HCT116 (cell line): ENCODE measurements at regions of chr9 and their contacts with region 1.

Region 1: GRCh38 chr9:81848472-81848871 is 79.8 kb upstream of the SPATA31D4 start:
- DNase-seq: no peak
- ATAC-seq: no peak
- H3K4me3 ChIP-seq: no peak overlapping the region
- H3K27ac ChIP-seq: no peak overlapping the region
- H3K4me1 ChIP-seq: peaks cover 3 to 15% of the 10 kb centered on the region in 2 experiments; a peak in 2 of 4 replicates
- H3K27me3 ChIP-seq: no peaks in the 10 kb centered on the region
- CTCF ChIP-seq: peak; percentile 11 to 45 (median 33); a peak in 4 of 6 replicates
- POLR2A ChIP-seq: no peak
- RAD21 ChIP-seq: peak; percentile 58

Region 2: DNA sequence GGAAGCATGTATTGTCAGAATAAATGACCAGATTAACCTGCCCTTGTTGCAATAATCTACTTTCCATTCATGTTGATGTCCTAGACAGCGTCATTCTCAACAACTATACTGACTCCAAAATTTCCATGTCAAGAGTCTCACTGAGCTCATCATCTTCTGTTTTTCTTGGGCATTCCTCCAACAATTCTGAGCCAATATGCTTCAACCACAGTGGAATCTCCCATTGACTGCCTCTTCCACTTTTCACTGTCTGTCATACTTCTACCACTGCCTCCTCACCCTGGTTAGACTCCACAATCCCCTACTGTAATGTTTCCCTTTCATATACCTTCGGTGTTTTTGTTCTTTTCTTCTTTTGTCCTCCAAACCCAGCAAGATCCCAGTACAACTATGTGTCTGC is 321.9 kb before region 1 on chr9:
- CTCF ChIA-PET with region 1: interaction called, 7 read pairs
- POLR2A ChIA-PET with region 1: no interaction called
- RAD21 ChIA-PET with region 1: no interaction called
- intact Hi-C with region 1: loop called (anchors 2 kb)
- DNase-seq: no peak
- ATAC-seq: no peak
- H3K4me3 ChIP-seq: no peak overlapping the region
- H3K27ac ChIP-seq: no peak overlapping the region
- H3K4me1 ChIP-seq: peaks cover 3 to 25% of the 10 kb centered on the region in 2 experiments; a peak in 3 of 4 replicates
- H3K27me3 ChIP-seq: no peaks in the 10 kb centered on the region
- CTCF ChIP-seq: no peak
- POLR2A ChIP-seq: no peak
- RAD21 ChIP-seq: no peak